ENCODE measurements at regions of chr19 and their contacts with region 1.

Region 1: DNA sequence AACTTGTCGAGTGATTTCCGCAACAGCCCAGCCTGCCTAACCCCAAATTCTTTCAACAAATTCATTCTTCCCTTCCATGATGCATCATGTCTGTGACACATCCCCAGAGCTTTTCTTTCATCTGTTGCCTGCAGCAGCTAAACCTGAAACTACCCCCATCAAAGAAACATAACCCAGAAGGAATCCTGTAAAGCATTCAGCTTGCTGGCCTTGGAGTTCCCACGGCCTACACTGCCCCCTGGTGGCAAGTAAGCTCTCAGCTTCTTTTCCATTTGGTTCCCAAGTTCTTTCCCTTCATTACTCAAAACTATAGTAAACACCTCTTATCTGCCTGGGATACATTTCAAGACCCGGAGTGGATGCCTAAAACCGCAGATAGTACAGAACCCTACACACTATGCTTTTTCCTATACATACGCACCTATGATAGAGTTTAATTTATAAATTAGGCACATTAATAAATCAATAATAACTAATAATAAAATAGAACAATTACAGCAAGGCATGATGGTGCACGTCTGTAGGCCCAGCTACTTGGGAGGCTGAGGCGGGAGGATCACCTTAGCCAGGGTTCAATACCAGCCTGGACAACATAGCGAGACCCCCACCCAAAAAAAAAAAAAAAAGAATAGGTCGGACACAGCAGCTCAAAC is 7.4 kb downstream of the ETHE1 start:
- DNase-seq: peak; percentile 71 to 91 (median 78)
- ATAC-seq: peak; percentile 99
- H3K4me3 ChIP-seq: no peak overlapping the region
- H3K4me3 Mint-ChIP-seq: no peak overlapping the region
- H3K27ac ChIP-seq: no peak overlapping the region
- H3K27ac Mint-ChIP-seq: peak overlapping the region; percentile 25
- H3K4me1 ChIP-seq: peaks cover 10% of the 10 kb centered on the region
- H3K4me1 Mint-ChIP-seq: peaks cover 11% of the 10 kb centered on the region
- H3K27me3 ChIP-seq: no peaks in the 10 kb centered on the region
- H3K27me3 Mint-ChIP-seq: no peaks in the 10 kb centered on the region
- CTCF ChIP-seq: peak; percentile 92

Region 2: DNA sequence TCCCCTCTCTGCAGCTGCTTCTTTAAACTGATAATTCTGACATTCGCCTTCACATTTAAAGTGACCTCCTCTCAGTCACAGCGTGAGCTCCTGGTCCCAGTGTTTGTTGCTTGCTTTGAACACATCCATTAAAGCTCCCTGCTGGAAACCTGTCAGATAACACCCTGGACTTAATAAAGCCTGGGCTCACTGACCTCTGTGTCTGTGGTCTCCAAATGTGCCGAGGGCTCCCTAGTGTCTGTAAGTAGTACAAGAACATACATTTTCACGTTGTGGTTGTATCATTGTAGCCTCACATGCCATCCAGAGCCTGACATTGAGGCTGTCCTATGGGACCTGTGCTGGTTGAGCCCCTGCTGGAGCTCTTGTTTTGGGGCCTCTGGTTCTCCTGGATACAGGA is 311.6 kb before region 1 on chr19:
- CTCF ChIA-PET with region 1: no interaction called
- POLR2A ChIA-PET with region 1: no interaction called
- intact Hi-C with region 1: loop called in 1 of 2 experiments (anchors 5 kb)
- DNase-seq: no peak
- ATAC-seq: no peak
- H3K4me3 ChIP-seq: no peak overlapping the region
- H3K4me3 Mint-ChIP-seq: no peak overlapping the region
- H3K27ac ChIP-seq: no peak overlapping the region
- H3K27ac Mint-ChIP-seq: no peak overlapping the region
- H3K4me1 ChIP-seq: no peaks in the 10 kb centered on the region
- H3K4me1 Mint-ChIP-seq: no peaks in the 10 kb centered on the region
- H3K27me3 ChIP-seq: no peaks in the 10 kb centered on the region
- H3K27me3 Mint-ChIP-seq: peaks cover 29% of the 10 kb centered on the region
- CTCF ChIP-seq: no peak

Region 3: DNA sequence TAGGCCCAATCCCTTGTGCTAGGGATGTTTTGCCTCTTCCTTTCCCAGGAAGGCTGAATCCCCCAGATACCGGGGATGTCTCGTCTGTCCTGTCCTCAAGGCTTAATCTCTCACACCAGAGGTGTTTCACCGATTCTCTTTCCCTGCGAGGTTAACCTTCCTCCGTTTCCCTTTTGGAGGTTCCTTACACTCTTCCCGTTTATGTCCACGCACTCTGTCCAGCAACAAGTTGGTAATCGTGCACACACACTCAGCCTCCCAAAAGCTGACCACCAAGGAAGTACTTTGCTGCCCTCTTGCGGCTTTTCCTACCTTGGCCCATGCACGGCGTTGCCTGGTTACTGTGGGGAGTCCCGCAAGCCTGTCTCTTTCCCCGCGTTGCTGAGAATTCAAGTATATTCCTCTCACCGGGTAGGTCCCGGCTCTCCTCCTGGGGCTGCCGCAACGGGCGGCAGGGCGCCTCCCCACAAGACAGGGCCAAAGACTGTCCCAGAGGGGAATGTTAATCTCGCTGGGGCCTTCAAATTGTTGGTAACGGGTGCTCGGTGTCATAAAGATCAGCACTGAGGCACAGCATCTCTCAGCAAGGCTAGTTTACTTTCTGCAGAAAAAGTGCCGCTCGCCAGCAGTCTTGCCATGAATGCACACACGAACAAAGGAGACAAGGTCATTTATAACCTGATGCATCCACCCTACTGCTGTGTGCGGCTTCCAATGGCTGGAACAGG is 202.8 kb before region 1 on chr19:
- CTCF ChIA-PET with region 1: no interaction called
- POLR2A ChIA-PET with region 1: no interaction called
- intact Hi-C with region 1: no loop called
- DNase-seq: no peak
- ATAC-seq: no peak
- H3K4me3 ChIP-seq: no peak overlapping the region
- H3K4me3 Mint-ChIP-seq: no peak overlapping the region
- H3K27ac ChIP-seq: no peak overlapping the region
- H3K27ac Mint-ChIP-seq: no peak overlapping the region
- H3K4me1 ChIP-seq: no peaks in the 10 kb centered on the region
- H3K4me1 Mint-ChIP-seq: no peaks in the 10 kb centered on the region
- H3K27me3 ChIP-seq: peaks cover 0 to 6% of the 10 kb centered on the region in 2 experiments
- H3K27me3 Mint-ChIP-seq: peaks cover 4% of the 10 kb centered on the region
- CTCF ChIP-seq: no peak

Region 4: GRCh38 chr19:43430142-43430710 is 89.3 kb before region 1 on chr19:
- CTCF ChIA-PET with region 1: interaction called, 65 read pairs
- POLR2A ChIA-PET with region 1: interaction called, 12 read pairs
- intact Hi-C with region 1: loop called (anchors 1 kb)
- DNase-seq: peak in 2 of 14 experiments; percentile 45 to 56
- ATAC-seq: peak; percentile 79
- H3K4me3 ChIP-seq: no peak overlapping the region
- H3K4me3 Mint-ChIP-seq: peak overlapping the region; percentile 16
- H3K27ac ChIP-seq: peak overlapping the region in 1 of 2 donors; percentile 53
- H3K27ac Mint-ChIP-seq: peak overlapping the region; percentile 89
- H3K4me1 ChIP-seq: peaks cover 17% of the 10 kb centered on the region
- H3K4me1 Mint-ChIP-seq: peaks cover 39% of the 10 kb centered on the region
- H3K27me3 ChIP-seq: no peaks in the 10 kb centered on the region
- H3K27me3 Mint-ChIP-seq: no peaks in the 10 kb centered on the region
- CTCF ChIP-seq: no peak

Region 5: GRCh38 chr19:43438291-43439096 is 81.1 kb before region 1 on chr19:
- CTCF ChIA-PET with region 1: interaction called, 9 read pairs
- POLR2A ChIA-PET with region 1: interaction called, 21 read pairs
- intact Hi-C with region 1: loop called (anchors 1 kb)
- DNase-seq: peak in 7 of 14 experiments; percentile 10 to 34 (median 26)
- ATAC-seq: peak; percentile 37
- H3K4me3 ChIP-seq: no peak overlapping the region
- H3K4me3 Mint-ChIP-seq: peak overlapping the region; percentile 76
- H3K27ac ChIP-seq: peak overlapping the region; percentile 74 to 90
- H3K27ac Mint-ChIP-seq: peak overlapping the region; percentile 96
- H3K4me1 ChIP-seq: peaks cover 41% of the 10 kb centered on the region
- H3K4me1 Mint-ChIP-seq: peaks cover 64% of the 10 kb centered on the region
- H3K27me3 ChIP-seq: no peaks in the 10 kb centered on the region
- H3K27me3 Mint-ChIP-seq: no peaks in the 10 kb centered on the region
- CTCF ChIP-seq: no peak

Region 6: GRCh38 chr19:43446746-43447489 is 72.6 kb before region 1 on chr19:
- CTCF ChIA-PET with region 1: interaction called, 96 read pairs
- POLR2A ChIA-PET with region 1: interaction called, 67 read pairs
- intact Hi-C with region 1: loop called (anchors 1 kb)
- DNase-seq: peak; percentile 74 to 91 (median 79)
- ATAC-seq: peak; percentile 86
- H3K4me3 ChIP-seq: no peak overlapping the region
- H3K4me3 Mint-ChIP-seq: no peak overlapping the region
- H3K27ac ChIP-seq: no peak overlapping the region
- H3K27ac Mint-ChIP-seq: peak overlapping the region; percentile 81
- H3K4me1 ChIP-seq: peaks cover 19% of the 10 kb centered on the region
- H3K4me1 Mint-ChIP-seq: peaks cover 39% of the 10 kb centered on the region
- H3K27me3 ChIP-seq: no peaks in the 10 kb centered on the region
- H3K27me3 Mint-ChIP-seq: no peaks in the 10 kb centered on the region
- CTCF ChIP-seq: peak; percentile 97

Region 7: GRCh38 chr19:44232867-44233266 is 713.3 kb after region 1 on chr19:
- CTCF ChIA-PET with region 1: no interaction called
- POLR2A ChIA-PET with region 1: no interaction called
- intact Hi-C with region 1: no loop called
- DNase-seq: no peak
- ATAC-seq: no peak
- H3K4me3 ChIP-seq: no peak overlapping the region
- H3K4me3 Mint-ChIP-seq: no peak overlapping the region
- H3K27ac ChIP-seq: no peak overlapping the region
- H3K27ac Mint-ChIP-seq: no peak overlapping the region
- H3K4me1 ChIP-seq: no peaks in the 10 kb centered on the region
- H3K4me1 Mint-ChIP-seq: no peaks in the 10 kb centered on the region
- H3K27me3 ChIP-seq: no peaks in the 10 kb centered on the region
- H3K27me3 Mint-ChIP-seq: no peaks in the 10 kb centered on the region
- CTCF ChIP-seq: no peak

Measured in CD4-positive, alpha-beta T cell (primary cell).